SK-N-SH (cell line): ENCODE measurements at regions of chr10 and their contacts with region 1.

Region 1: DNA sequence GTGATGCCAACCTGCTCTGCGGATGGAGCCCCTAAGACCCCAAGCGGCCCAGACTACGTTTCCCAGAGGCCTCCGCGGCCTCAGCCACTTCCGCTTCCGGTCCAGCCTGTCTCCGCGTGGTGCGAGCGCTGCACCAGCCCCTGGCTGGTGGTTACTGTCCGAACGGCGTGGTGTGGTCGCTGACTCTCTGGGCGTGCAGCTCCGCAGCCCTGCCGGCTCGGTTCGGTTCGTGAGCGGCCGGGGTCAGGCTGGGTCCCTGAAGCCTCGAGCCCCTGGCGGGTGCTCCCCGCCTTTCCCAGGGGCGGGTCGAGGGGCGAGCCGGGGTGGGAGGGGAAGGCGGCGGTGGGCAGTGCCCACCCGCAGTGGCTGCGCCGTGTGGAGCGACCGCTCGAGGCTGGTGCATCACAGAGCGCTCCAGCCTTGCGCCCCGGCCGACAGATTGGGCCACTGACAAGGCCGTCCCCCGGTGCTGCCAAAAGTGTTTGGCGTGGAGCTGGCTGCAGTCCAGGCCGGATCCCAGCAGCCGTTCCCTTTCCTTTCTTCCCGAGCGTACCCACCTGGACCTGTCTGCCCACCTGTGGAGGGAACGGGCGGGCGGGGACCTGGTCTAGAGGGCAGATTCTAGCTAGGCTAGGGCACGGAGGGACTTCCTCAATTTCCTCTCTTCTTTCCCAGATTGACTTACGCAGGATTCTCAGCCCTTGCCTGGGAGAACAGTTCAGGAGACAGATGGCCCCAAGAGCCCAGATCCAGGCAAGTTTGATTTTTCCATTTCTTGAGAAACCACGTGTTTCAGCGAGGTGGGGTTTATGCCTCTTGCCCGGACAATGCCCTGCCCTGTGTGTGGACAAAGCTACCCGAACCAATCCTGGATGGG is at the start of gene ZNF485:
- DNase-seq: peak; percentile 91
- H3K4me3 ChIP-seq: peak within 1 kb of the TSS; percentile 73 to 76
- H3K27ac ChIP-seq: peak within 1 kb of the TSS; percentile 45 to 91; a peak in 3 of 4 replicates
- H3K4me1 ChIP-seq: peaks cover 5 to 12% of the 10 kb centered on the region in 2 experiments; a peak in 2 of 4 replicates
- H3K27me3 ChIP-seq: no peaks in the 10 kb centered on the region; the same call in 1 of the 2 replicates
- CTCF ChIP-seq: no peak
- EP300 ChIP-seq: no peak
- RAD21 ChIP-seq: no peak
- polyA plus RNA-seq, gene ZNF485: 3.0 and 3.9 TPM in 2 replicates

Region 2: GRCh38 chr10:43648398-43649184 is 42.0 kb after region 1 on chr10 and contains the start of gene ZNF32:
- CTCF ChIA-PET with region 1: interaction called, 4 read pairs
- POLR2A ChIA-PET with region 1: interaction called, 11 read pairs
- DNase-seq: peak; percentile 96
- H3K4me3 ChIP-seq: peak within 1 kb of the TSS; percentile 64 to 79
- H3K27ac ChIP-seq: peak within 1 kb of the TSS; percentile 2 to 76; a peak in 1 of 4 replicates
- H3K4me1 ChIP-seq: peaks cover under 1 to 3% of the 10 kb centered on the region in 2 experiments; a peak in 2 of 4 replicates
- H3K27me3 ChIP-seq: no peaks in the 10 kb centered on the region
- CTCF ChIP-seq: no peak
- EP300 ChIP-seq: no peak
- RAD21 ChIP-seq: no peak
- polyA plus RNA-seq, gene ZNF32: 27.2 and 39.0 TPM in 2 replicates